Panc1 (cell line): ENCODE measurements at regions of chr20 and their contacts with region 1.

Region 1: GRCh38 chr20:44011251-44011940 is 96.7 kb downstream of the TOX2 start:
- DNase-seq: no peak
- ATAC-seq: 0 out of 2 replicates have a peak, but pooled peaks have one; percentile 16
- H3K4me3 ChIP-seq: no peak overlapping the region
- H3K27ac ChIP-seq: peak overlapping the region; percentile 36; the same call in 1 of the 2 replicates
- H3K4me1 ChIP-seq: peaks cover 19% of the 10 kb centered on the region
- H3K27me3 ChIP-seq: no peaks in the 10 kb centered on the region
- CTCF ChIP-seq: no peak

Region 2: GRCh38 chr20:43786885-43787284 is 224.5 kb before region 1 on chr20:
- CTCF ChIA-PET with region 1: interaction called, 13 read pairs
- POLR2A ChIA-PET with region 1: no interaction called
- in situ Hi-C with region 1: no loop called
- intact Hi-C with region 1: no loop called
- DNase-seq: no peak
- ATAC-seq: peak; percentile 62; the same call in 1 of the 2 replicates
- H3K4me3 ChIP-seq: no peak overlapping the region
- H3K27ac ChIP-seq: no peak overlapping the region
- H3K4me1 ChIP-seq: no peaks in the 10 kb centered on the region
- H3K27me3 ChIP-seq: no peaks in the 10 kb centered on the region
- CTCF ChIP-seq: no peak